Pancreas (tissue), 10 donors: ENCODE measurements at regions of chr3 and their contacts with region 1.

Region 1: GRCh38 chr3:141000027-141000663 is 51.0 kb upstream of the SPSB4 start:
- DNase-seq: peak; percentile 41 to 78 (median 66)
- ATAC-seq: peak; percentile 88 to 100 (median 100)
- H3K4me3 ChIP-seq: no peak overlapping the region
- H3K27ac ChIP-seq: no peak overlapping the region
- H3K4me1 ChIP-seq: no peaks in the 10 kb centered on the region
- H3K27me3 ChIP-seq: no peaks in the 10 kb centered on the region
- CTCF ChIP-seq: peak; percentile 17 to 72 (median 62)

Region 2: DNA sequence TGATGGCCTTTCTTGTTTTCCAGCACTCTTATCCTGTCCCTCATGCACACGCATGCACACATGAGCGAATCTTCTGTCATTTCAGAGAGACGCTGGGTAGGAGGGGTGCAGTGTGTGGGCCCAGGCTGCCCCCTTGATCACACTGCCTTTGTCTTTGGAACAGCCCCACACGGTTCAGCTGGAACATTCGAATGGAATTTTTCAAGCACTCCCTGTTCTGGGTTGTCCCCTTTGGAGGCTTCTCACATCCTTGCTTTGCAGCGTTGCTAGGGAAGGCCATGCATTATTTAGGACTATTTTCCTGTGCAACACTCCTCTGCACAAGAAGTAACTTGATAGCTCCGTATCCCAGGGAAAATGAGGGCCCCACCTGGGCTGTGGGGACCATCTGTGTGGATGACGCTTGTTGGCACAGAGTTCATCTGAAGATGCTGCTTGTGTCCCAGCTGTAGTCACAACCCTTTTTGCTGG is 129.4 kb after region 1 on chr3:
- intact Hi-C with region 1: no loop called
- DNase-seq: no peak
- ATAC-seq: no peak
- H3K4me3 ChIP-seq: no peak overlapping the region
- H3K27ac ChIP-seq: no peak overlapping the region
- H3K4me1 ChIP-seq: peaks cover 6 to 9% (median 8%) of the 10 kb centered on the region in 3 donors
- H3K27me3 ChIP-seq: no peaks in the 10 kb centered on the region
- CTCF ChIP-seq: no peak

Region 3: GRCh38 chr3:141184430-141184829 is 184.3 kb after region 1 on chr3:
- intact Hi-C with region 1: loop called in 1 of 3 experiments (anchors 10 kb)
- DNase-seq: no peak
- ATAC-seq: no peak
- H3K4me3 ChIP-seq: no peak overlapping the region
- H3K27ac ChIP-seq: no peak overlapping the region
- H3K4me1 ChIP-seq: no peaks in the 10 kb centered on the region
- H3K27me3 ChIP-seq: no peaks in the 10 kb centered on the region
- CTCF ChIP-seq: no peak